ENCODE measurements at regions of chr16 and their contacts with region 1.

Region 1: GRCh38 chr16:50671644-50672260 is 9.4 kb downstream of the SNX20 start:
- DNase-seq: peak; percentile 82
- H3K4me3 Mint-ChIP-seq: no peak overlapping the region
- H3K27ac Mint-ChIP-seq: peak overlapping the region; percentile 84
- H3K4me1 Mint-ChIP-seq: peaks cover 29% of the 10 kb centered on the region
- H3K27me3 Mint-ChIP-seq: no peaks in the 10 kb centered on the region

Region 2: DNA sequence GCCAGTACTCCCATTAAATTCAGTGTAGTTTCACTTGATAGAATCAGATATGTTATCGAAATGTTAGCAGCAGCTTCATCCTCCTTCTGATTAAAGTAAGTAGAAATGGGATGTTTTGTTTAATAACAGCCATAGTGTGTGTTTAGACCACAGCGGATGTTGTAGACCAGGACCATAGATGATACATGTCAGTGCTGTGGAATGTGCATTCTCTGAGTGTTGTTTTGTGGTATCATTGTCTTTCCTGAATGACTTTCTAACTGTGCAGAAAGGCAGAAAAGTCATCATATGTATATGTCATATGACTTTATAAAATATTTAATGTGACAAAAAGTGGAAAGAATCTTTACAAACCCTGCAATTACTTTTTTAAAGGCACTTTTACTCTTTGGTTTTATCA is 125.7 kb after region 1 on chr16:
- CTCF ChIA-PET with region 1: interaction called, 11 read pairs
- intact Hi-C with region 1: no loop called
- DNase-seq: no peak
- H3K4me3 Mint-ChIP-seq: no peak overlapping the region
- H3K27ac Mint-ChIP-seq: no peak overlapping the region
- H3K4me1 Mint-ChIP-seq: peaks cover 10% of the 10 kb centered on the region
- H3K27me3 Mint-ChIP-seq: no peaks in the 10 kb centered on the region

Region 3: GRCh38 chr16:51500306-51500705 is 828.6 kb after region 1 on chr16:
- CTCF ChIA-PET with region 1: no interaction called
- intact Hi-C with region 1: no loop called
- DNase-seq: no peak
- H3K4me3 Mint-ChIP-seq: no peak overlapping the region
- H3K27ac Mint-ChIP-seq: no peak overlapping the region
- H3K4me1 Mint-ChIP-seq: no peaks in the 10 kb centered on the region
- H3K27me3 Mint-ChIP-seq: no peaks in the 10 kb centered on the region

Measured in activated naive CD4-positive, alpha-beta T cell treated with anti-CD3 and anti-CD28 coated beads for 36 hours (primary cell).